ENCODE measurements at regions of chrX and their contacts with region 1.

Region 1: DNA sequence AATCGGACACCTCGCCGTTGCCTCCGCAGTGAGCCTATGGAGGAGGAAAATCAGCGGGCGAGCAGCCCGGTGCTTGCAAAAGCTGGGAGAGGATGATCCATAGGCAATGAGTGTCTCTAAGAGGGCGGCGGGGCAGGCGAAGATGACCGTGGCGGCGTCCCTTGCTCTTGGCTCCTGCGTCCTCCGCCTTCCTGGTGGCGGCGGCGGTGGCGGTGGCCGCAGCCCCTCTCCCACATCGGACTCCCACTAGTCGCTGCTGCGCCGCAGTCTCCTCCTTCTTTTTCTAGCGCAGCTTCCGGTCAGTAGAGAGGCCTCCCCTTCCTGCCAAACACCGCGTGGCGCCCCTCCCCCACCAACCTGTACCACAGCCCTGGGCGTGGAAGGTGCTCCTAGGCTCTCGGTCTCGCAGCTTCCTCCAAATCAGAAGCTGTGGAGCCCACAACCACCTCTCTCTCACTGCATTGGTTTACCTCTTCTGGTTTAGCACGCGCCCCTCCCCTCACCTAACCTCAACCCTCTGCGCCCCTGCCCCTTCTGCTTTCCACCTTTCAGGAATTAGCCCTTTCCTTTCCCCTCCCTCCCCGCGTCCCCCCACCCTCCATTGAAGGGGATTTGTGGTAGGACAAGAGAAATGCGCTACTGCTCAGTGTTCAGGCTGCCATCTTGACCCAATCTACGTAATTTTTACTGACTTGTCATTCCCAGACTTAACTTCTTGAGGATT is at the start of gene SPIN3:
- DNase-seq: peak; percentile 85 to 91
- ATAC-seq: peak; percentile 92
- H3K4me3 ChIP-seq: peak within 1 kb of the TSS; percentile 38 to 69
- H3K27ac ChIP-seq: peak within 1 kb of the TSS in 1 of 2 donors; percentile 16
- H3K4me1 ChIP-seq: no peaks in the 10 kb centered on the region
- H3K27me3 ChIP-seq: no peaks in the 10 kb centered on the region
- total RNA-seq, gene SPIN3: 7.4 to 18.3 TPM

Region 2: DNA sequence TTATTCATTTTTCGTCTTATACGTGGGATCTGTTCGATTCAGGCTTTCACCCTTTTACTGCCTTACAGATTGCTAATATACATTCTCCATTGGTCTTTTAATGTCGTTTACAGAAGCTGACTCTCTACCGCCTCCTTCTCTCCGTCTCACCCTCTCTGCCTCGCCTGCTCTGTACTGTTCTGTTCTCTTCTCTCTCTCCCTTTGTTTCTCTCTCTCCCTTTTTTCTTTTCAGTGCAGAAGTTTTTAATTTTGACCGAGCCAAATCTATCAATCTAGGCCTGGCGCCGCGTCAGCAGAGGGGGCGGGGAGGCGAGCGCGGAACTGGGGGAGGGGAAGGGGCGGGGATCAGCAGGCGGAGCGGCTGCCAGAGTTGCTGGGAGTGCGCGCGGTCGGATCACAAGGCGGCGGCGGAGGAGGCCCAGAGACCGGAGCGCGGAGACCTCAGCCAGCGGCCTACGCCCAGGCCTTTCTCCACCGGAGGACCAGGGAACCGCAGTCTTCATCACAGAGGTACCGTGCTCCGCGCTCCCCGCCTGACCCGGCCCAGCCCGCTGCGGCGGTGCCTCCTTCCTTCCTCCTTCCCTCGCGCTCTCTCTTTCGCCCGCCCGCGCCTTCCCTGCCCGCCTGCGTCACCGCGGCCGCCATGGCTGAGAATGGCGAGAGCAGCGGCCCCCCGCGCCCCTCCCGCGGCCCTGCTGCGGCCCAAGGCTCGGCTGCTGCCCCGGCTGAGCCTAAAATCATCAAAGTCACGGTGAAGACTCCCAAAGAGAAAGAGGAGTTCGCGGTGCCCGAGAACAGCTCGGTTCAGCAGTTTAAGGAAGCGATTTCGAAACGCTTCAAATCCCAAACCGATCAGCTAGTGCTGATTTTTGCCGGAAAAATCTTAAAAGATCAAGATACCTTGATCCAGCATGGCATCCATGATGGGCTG is 431.9 kb before region 1 on chrX and contains the start of gene UBQLN2:
- intact Hi-C with region 1: loop called in 1 of 2 experiments (anchors 10 kb)
- DNase-seq: peak; percentile 88 to 93
- ATAC-seq: peak; percentile 95
- H3K4me3 ChIP-seq: peak within 1 kb of the TSS; percentile 63 to 67
- H3K27ac ChIP-seq: peak within 1 kb of the TSS; percentile 3 to 83
- H3K4me1 ChIP-seq: no peaks in the 10 kb centered on the region
- H3K27me3 ChIP-seq: no peaks in the 10 kb centered on the region
- total RNA-seq, gene UBQLN2: 28.2 to 31.7 TPM

Region 3: DNA sequence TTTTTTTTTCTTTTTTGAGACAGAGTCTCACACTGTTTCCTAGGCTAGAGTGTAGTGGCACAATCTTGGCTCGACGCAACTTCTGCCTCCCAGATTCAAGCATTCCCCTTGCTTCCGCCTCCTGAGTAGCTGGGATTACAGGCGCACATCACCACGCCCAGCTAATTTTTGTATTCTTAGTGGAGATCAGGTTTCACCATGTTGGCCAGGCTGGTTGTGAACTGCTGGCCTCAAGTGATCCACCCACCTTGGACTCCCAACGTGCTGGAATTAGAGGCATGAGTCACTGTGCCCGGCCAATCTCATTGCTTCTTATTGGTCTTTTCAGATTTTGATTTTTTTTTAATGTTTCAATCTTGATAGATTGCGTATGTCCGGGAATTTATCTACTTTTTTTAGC is 142.0 kb before region 1 on chrX:
- intact Hi-C with region 1: no loop called
- DNase-seq: no peak
- ATAC-seq: no peak
- H3K4me3 ChIP-seq: no peak overlapping the region
- H3K27ac ChIP-seq: no peak overlapping the region
- H3K4me1 ChIP-seq: no peaks in the 10 kb centered on the region
- H3K27me3 ChIP-seq: no peaks in the 10 kb centered on the region

Region 4: DNA sequence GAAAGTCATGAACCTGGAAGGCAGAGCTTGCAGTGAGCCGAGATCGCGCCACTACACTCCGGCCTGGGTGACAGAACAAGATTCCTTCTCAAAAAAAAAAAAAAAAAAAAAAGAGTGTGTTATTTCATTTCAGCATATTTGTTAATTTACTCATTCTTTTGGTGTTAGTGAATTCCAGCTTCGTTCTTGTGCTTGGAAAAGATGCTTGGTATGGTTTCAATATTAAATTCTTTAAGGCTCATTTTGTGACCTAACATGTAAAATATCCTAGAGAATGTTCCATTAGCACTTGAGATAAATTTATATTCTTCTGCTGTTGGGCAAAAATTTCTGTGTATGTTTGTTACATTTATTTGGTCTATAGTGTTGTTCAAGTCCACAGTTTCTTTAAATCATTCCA is 66.9 kb before region 1 on chrX:
- intact Hi-C with region 1: no loop called
- DNase-seq: no peak
- ATAC-seq: no peak
- H3K4me3 ChIP-seq: no peak overlapping the region
- H3K27ac ChIP-seq: no peak overlapping the region
- H3K4me1 ChIP-seq: no peaks in the 10 kb centered on the region
- H3K27me3 ChIP-seq: no peaks in the 10 kb centered on the region

Region 5: DNA sequence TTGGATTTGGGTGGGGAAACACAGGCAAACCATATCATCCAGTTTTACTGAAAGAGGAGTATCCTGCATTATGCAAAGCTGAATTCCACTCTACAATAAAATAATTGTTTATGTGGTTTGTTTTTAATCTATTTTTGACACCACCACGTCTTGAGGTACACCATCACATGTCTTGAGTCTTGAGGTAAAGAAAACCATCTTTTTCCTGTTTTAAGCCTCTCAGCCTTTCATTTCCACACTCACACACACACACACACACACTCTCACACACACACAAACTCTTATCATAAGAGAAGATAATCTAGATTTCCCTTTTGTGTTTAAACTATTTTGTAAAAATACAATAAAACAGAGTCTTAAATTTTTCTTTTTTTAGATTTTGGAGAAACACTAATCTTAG is 32.1 kb before region 1 on chrX:
- intact Hi-C with region 1: no loop called
- DNase-seq: no peak
- ATAC-seq: no peak
- H3K4me3 ChIP-seq: no peak overlapping the region
- H3K27ac ChIP-seq: no peak overlapping the region
- H3K4me1 ChIP-seq: no peaks in the 10 kb centered on the region
- H3K27me3 ChIP-seq: no peaks in the 10 kb centered on the region